ENCODE measurements at regions of chrX and their contacts with region 1.

Region 1: DNA sequence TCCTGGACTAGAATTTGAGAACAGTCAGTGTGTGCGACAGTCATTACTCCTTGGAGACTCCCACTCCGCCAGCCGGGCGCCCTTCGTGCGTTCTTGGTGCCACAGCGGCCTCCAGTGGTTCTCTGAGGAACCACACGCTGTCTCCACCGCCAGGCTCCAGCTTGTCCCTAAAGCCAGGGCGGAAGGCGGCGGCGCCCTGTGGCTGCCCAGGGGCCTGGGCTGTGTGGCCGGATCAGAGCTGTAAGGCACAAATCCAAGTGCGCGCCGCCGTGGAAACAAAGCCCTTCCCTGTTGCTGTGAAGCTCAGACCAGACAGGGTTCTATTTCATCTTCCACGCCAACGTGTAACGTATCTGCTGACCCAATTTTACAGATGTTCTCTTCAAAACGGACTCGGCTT is 34.2 kb downstream of the IDS start:
- DNase-seq: peak; percentile 72 to 86
- ATAC-seq: peak; percentile 88 to 96 (median 94)
- H3K4me3 ChIP-seq: peak overlapping the region; percentile 30
- H3K27ac ChIP-seq: no peak overlapping the region
- H3K4me1 ChIP-seq: no peaks in the 10 kb centered on the region
- H3K27me3 ChIP-seq: no peaks in the 10 kb centered on the region
- CTCF ChIP-seq: peak; percentile 88

Region 2: DNA sequence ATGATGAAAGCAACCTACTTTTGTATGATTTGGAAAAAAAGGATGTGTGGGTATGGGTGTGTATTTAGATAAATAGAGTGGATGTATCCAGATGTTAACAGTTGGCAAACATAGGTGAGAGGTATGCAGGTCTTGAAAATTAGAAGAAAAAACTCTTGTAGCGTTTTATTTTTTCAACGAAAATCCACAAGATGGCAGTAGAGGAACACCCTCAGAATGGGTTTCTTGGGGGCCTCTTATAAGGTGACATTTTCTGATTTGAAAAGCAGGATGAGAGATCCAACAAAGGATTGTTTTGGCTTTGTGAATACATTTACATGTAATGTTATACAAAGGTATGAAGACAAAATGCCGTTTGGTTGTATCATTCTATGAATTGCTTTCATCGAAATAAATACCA is 1421.5 kb before region 1 on chrX:
- intact Hi-C with region 1: loop called (anchors 5 to 10 kb)
- DNase-seq: no peak
- ATAC-seq: no peak
- H3K4me3 ChIP-seq: no peak overlapping the region
- H3K27ac ChIP-seq: no peak overlapping the region
- H3K4me1 ChIP-seq: no peaks in the 10 kb centered on the region
- H3K27me3 ChIP-seq: no peaks in the 10 kb centered on the region
- CTCF ChIP-seq: peak; percentile 44

Region 3: DNA sequence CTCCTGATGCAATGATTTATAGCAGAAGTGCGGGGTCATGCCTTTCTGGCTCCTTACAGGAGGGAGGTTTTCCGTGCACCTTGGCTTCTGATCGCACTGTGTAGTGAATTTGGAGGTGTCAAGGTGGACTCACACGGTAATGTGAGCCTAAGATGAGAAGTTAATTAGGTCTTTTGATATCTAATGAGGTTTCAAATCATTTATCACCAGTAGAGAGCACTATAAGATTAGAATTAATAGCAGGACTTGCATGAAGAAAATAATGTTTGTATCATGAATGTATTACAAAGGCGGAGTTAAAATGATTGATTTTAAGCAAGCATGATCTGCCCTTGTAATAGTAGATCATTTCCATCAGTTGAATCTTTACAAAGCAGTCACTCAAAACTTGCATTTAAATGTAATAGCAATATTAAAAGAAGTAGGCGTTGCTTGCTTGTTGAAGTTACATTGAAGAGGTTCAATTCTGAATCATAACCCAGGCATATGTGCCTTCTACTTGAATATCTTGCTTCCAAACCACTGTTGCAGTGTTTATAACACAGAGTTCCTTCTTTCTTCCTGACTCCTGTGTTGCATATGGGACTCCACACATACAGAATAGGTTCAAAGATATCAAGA is 1337.7 kb before region 1 on chrX:
- intact Hi-C with region 1: loop called in 1 of 2 experiments (anchors 10 kb)
- DNase-seq: no peak
- ATAC-seq: no peak
- H3K4me3 ChIP-seq: no peak overlapping the region
- H3K27ac ChIP-seq: no peak overlapping the region
- H3K4me1 ChIP-seq: no peaks in the 10 kb centered on the region
- H3K27me3 ChIP-seq: no peaks in the 10 kb centered on the region
- CTCF ChIP-seq: no peak

Region 4: GRCh38 chrX:149539283-149540130 is 68.6 kb after region 1 on chrX:
- intact Hi-C with region 1: no loop called
- DNase-seq: peak; percentile 86 to 94
- ATAC-seq: peak; percentile 48 to 62 (median 60)
- H3K4me3 ChIP-seq: peak overlapping the region; percentile 57
- H3K27ac ChIP-seq: peak overlapping the region; percentile 36
- H3K4me1 ChIP-seq: no peaks in the 10 kb centered on the region
- H3K27me3 ChIP-seq: no peaks in the 10 kb centered on the region
- CTCF ChIP-seq: no peak